Right cardiac atrium (tissue), 5 donors: ENCODE measurements at regions of chr11 and their contacts with region 1.

Region 1: DNA sequence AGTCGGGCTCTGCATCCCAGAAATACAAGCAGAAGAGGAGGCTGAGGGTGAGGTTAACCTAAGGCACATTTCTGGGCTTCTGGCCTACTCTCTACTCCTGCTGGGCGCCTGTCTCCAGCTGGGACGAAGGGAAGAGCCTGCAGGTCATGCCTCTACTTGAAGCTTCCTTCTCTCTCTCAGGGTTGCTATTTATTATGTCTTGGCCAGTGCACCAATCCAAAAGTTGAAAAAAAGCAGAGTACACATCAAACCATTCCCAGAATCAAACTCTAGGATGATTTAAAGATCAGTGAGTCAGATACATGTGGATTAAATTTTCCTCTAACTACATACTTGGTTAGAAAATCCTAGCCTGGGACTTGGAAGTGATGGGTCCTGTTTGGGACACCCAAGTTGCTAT is 60.2 kb upstream of the CDON start:
- DNase-seq: no peak
- ATAC-seq: no peak
- H3K4me3 ChIP-seq: no peak overlapping the region
- H3K27ac ChIP-seq: no peak overlapping the region
- H3K4me1 ChIP-seq: peaks cover 3% of the 10 kb centered on the region
- H3K27me3 ChIP-seq: no peaks in the 10 kb centered on the region

Region 2: DNA sequence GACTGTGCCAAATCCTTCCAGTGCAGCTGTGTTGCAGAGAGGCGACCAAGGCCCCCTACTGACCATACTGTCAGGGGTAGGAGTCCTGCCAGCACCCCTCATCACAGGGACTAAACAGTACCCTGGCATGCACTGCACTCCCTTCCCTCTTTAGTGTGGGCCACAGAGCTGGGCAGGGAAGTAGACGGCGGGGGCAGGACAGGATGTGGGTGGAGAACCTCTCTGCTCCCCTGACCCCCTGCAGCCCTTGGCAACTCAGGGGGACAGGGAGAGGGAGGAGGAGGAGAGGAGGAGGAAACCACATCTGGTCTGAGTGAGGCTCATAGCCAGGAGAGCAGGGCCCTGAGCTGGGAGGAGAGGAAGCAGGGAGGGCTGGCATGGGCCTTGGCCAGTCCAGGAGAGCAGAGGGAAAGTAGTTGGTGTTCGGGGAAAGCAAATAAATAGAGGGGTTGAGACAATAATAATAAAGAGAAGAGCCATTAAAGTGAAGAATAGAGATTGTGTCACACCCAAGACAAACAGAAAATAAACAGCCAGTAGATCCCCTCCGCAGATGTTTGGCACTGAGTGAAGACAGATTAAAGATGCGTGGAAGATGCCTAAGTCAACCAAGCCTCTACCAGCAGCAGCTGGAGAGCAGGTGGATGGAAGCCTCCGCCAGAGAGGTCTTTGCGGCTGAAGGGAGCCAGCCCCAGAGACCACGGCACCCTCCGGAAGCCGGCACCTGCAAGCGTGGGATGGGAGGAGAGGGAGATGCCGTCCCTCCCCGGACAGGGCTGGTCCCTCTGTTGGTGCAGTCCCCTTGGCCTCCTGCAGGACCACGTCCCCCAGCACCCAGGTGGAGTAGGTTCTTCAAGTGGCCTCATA is 27.1 kb after region 1 on chr11:
- intact Hi-C with region 1: loop called in 1 of 4 experiments (anchors 1 kb)
- DNase-seq: no peak
- ATAC-seq: peak in 1 of 2 donors; percentile 39
- H3K4me3 ChIP-seq: no peak overlapping the region
- H3K27ac ChIP-seq: no peak overlapping the region
- H3K4me1 ChIP-seq: no peaks in the 10 kb centered on the region
- H3K27me3 ChIP-seq: no peaks in the 10 kb centered on the region